ENCODE measurements at regions of chr21 and their contacts with region 1.

Region 1: DNA sequence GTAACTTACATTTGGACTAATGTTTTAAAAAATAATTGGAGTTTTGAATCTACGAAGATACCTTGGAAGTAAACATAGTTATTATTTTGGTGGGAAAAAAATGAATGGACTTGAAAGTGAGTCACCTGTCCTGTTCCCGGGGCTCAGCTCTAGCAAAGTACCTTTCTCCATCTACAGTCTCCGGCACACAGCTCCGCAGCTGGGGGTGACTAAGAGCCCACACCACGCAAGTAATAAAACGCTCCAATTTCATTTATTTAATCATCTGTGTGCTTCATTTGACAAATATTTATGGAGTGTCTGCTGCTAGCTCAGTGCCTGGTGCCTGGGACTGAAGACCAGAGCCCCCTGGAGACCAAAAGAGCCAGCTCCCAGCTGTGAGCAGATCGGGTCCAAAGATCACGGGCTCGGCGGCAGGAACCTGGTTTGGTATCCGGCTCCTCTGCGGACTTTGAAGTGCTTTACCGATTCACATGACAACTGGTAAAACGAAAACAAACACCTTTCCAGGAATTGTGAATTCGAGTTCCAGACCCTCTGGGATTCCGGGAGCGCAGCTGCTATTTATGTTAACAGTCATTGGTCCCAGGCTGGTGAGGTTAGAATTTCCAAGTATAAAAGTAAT is 1.7 kb upstream of the RIPK4 start:
- DNase-seq: no peak
- ATAC-seq: no peak
- H3K4me3 ChIP-seq: peak overlapping the region in 3 of 4 donors; percentile 14 to 35 (median 21)
- H3K27ac ChIP-seq: no peak overlapping the region
- H3K4me1 ChIP-seq: peaks cover 15% of the 10 kb centered on the region in 2 donors
- H3K27me3 ChIP-seq: peaks cover 69 to 78% (median 72%) of the 10 kb centered on the region in 3 donors
- CTCF ChIP-seq: no peak
- POLR2A ChIP-seq: no peak

Region 2: GRCh38 chr21:41663801-41664788 is 104.5 kb before region 1 on chr21:
- in situ Hi-C with region 1: loop called in 1 of 4 experiments (anchors 25 kb)
- intact Hi-C with region 1: no loop called
- DNase-seq: no peak
- ATAC-seq: no peak
- H3K4me3 ChIP-seq: no peak overlapping the region
- H3K27ac ChIP-seq: no peak overlapping the region
- H3K4me1 ChIP-seq: no peaks in the 10 kb centered on the region
- H3K27me3 ChIP-seq: peaks cover 0 to 11% (median 0%) of the 10 kb centered on the region in 3 donors
- CTCF ChIP-seq: no peak
- POLR2A ChIP-seq: no peak